ENCODE measurements at regions of chr1 and their contacts with region 1.

Region 1: DNA sequence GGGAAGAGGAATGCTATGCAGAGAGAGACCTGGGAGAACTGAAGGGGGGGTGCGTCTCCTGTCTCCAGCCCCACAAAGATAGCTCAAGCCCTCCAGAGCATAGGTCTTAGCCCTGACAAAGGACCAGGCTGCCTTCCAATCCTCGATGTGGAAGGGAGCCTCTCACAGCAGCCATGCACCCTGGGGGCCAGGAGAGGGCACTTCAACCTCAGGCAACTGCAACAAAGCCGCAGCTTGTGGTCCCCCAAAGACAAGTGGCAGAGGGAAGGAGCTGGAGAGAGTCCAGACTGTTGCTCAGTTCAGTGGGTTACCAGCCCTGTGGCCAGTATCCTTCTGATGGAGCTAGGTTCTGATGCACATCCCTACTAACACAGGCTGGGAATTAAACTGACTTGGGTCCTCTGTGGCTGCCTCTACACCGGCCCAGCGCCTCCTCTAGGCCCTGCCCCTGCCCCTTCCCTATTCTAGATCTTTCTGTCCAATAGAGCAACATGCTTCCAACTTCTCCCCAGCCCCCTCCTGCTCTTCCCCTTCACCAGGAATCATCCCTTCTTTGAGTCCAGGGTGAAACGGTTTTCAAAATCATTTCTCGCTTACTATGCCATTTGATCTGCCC is 100.8 kb upstream of the SPATA6 start:
- DNase-seq: peak; percentile 45 to 60 (median 49)
- H3K4me3 ChIP-seq: no peak overlapping the region
- H3K27ac ChIP-seq: no peak overlapping the region
- H3K4me1 ChIP-seq: no peaks in the 10 kb centered on the region
- H3K27me3 ChIP-seq: no peaks in the 10 kb centered on the region
- CTCF ChIP-seq: peak in 1 of 3 donors; percentile 16
- EP300 ChIP-seq: no peak
- POLR2A ChIP-seq: no peak

Region 2: DNA sequence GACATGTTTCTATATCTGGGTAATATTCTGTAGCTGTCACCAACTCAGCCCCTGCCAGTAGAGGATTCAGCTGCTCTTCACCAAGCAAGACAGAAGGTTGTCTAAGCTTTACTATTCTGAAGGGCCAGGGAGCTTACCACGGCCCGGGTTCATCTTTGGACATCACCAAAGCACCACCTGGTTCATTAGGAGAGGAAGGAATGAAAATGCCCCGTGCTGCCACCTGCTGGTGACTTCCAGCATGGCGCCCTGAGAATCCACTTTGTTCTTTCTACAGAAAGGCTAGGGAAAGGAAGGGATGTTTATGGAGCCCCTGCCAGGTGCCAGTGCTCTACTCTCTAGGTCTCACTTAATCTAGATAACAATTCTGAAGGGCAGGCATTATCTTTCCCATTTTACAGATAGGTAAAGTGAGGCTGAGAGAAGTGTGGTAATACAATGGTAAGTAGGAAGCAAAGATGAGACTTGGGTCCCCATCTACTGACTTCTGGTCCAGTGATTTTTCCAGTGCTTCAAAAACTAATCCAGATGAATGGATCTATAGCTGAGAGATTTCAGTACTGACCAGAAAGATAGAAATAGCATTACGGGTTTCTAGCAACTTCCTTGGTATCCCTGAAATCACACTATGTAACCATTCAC is 124.4 kb after region 1 on chr1:
- intact Hi-C with region 1: loop called in 2 of 4 experiments (anchors 10 kb)
- DNase-seq: peak; percentile 17 to 71 (median 57)
- H3K4me3 ChIP-seq: no peak overlapping the region
- H3K27ac ChIP-seq: no peak overlapping the region
- H3K4me1 ChIP-seq: no peaks in the 10 kb centered on the region
- H3K27me3 ChIP-seq: no peaks in the 10 kb centered on the region
- CTCF ChIP-seq: peak; percentile 28 to 40 (median 37)
- EP300 ChIP-seq: no peak
- POLR2A ChIP-seq: no peak

Region 3: GRCh38 chr1:48831120-48831978 is 258.6 kb after region 1 on chr1:
- intact Hi-C with region 1: loop called in 1 of 4 experiments (anchors 10 kb)
- DNase-seq: no peak
- H3K4me3 ChIP-seq: no peak overlapping the region
- H3K27ac ChIP-seq: no peak overlapping the region
- H3K4me1 ChIP-seq: no peaks in the 10 kb centered on the region
- H3K27me3 ChIP-seq: no peaks in the 10 kb centered on the region
- CTCF ChIP-seq: no peak
- EP300 ChIP-seq: no peak
- POLR2A ChIP-seq: no peak